Aorta (tissue), 5 donors: ENCODE measurements at regions of chr22 and their contacts with region 1.

Region 1: GRCh38 chr22:32245042-32245441 is 10.1 kb downstream of the SLC5A4 start:
- DNase-seq: no peak
- ATAC-seq: no peak
- H3K4me3 ChIP-seq: no peak overlapping the region
- H3K27ac ChIP-seq: no peak overlapping the region
- H3K4me1 ChIP-seq: no peaks in the 10 kb centered on the region
- H3K27me3 ChIP-seq: peaks cover 0 to 2% of the 10 kb centered on the region in 2 donors

Region 2: DNA sequence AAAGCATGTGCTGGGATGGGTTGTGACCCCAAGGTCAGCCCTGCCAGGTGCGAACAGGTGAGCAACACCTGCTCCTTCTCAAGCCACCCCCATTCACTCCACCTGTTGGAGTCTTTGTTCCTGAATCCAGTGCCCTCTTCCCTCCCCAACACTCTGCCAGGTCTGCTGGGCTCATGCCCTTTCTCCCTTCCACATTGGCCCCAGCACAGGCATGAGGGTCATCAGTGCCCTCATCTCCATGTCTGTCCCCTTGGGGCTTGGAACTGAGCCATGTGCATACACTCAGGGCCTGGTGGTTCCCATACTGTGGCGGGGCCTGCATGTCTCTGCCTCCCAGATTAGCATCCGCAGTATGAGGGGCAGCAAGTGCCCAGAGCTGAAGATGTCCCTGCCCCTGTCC is 59.2 kb before region 1 on chr22:
- intact Hi-C with region 1: loop called in 1 of 2 experiments (anchors 10 kb)
- DNase-seq: peak in 1 of 2 donors; percentile 44
- ATAC-seq: no peak
- H3K4me3 ChIP-seq: no peak overlapping the region
- H3K27ac ChIP-seq: no peak overlapping the region
- H3K4me1 ChIP-seq: no peaks in the 10 kb centered on the region
- H3K27me3 ChIP-seq: no peaks in the 10 kb centered on the region

Region 3: DNA sequence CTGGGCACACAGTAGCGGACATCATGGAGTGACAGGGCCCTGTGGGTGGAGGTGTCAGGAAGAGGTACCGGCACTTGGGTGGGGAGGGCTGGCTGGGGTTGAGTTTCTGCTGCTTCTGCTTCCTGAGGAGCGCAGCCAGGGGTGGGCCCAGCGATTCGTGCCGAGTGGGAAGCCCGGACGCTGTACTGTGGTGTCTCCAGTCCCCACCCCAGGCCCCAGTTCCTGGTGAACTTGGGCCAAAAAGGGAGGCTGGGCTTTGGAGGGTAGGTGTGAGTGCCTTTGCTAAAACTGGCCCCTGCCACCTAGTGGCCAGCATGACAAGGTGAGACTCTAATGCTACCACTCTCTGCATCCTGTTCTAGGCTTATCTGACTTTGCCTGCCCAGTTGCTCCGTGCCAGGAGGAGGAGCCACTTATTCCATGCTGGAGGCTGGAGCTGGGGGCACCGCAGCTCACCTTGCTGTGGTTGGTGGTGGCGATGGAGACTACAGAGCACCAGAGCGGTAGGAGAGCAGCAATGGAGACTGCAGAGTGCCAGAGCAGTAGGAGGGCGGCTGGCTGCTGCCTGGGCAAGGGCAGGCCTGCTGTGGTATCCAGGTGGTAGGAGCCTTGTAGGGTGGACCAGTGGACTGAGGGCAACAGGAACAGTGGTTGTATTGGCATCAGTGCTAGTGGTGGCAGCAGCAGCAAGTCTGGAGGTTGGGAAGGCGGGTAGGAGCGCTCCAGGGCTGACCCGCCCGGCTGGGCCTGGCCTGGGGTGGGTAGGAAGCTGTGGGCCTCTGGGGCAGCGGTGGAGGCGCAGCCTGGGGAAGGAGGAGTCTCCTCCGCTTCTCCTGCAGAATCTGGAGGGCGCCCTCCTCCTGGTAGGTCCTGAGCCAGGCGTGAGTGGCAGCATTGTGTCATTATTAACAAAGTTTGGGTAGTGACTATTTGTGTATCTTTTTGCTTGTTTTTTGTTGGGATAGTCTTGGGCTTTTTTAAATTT is 38.0 kb before region 1 on chr22:
- intact Hi-C with region 1: loop called in 1 of 2 experiments (anchors 5 kb)
- DNase-seq: no peak
- ATAC-seq: no peak
- H3K4me3 ChIP-seq: no peak overlapping the region
- H3K27ac ChIP-seq: no peak overlapping the region
- H3K4me1 ChIP-seq: no peaks in the 10 kb centered on the region
- H3K27me3 ChIP-seq: no peaks in the 10 kb centered on the region